Activated CD4-positive, alpha-beta T cell treated with anti-CD3 and anti-CD28 coated beads, Interleukin-2, amount 10 ng/mL, durations not matched to agents 24 days and 14 days (primary cell): ENCODE measurements at regions of chr20 and their contacts with region 1.

Region 1: DNA sequence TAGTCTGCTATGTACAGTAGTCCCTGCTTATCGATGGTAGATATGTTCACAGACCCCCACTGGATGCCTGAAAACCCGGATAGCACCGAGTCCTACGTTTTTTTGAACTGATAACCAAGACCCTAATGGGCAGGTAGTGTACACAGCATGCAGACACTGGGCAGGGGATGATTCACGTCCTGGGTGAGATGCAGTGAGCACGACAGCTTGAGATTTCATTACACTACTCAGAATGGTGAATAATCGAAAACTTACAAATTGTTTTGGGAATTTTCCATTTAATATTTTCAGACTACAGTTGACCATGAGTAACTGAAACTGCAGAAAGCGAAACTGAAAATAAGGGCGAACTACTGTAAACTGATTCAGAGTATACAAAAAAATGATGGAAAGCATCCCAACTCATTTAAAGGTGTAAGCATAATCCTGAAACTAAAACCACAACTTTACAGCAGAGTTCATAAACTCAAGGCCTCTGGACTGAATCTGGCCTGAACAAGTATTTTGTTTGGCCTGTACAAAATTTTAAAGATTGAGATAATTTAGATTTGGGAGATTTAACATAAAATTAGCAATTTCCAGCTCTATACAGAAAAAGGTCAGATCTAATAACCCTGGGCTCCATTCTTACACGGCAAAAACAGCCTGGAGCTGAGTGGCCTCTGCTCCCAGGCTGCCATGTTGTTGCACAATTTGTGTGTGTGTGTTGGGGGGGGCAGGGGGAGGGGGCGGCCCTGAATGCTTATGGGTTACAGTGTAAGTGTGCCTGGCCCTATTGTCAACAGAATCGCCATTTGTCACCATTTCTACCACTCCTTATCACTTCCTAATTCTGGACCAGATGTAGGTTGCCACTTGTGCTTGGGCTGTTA is 34.9 kb downstream of the RNF24 start:
- DNase-seq: peak; percentile 71
- H3K4me3 Mint-ChIP-seq: peak overlapping the region; percentile 80
- H3K27ac Mint-ChIP-seq: peak overlapping the region; percentile 86
- H3K4me1 Mint-ChIP-seq: peaks cover 16% of the 10 kb centered on the region
- H3K27me3 Mint-ChIP-seq: no peaks in the 10 kb centered on the region

Region 2: GRCh38 chr20:3888622-3889488 is 91.6 kb before region 1 on chr20 and contains the start of gene PANK2:
- intact Hi-C with region 1: no loop called
- DNase-seq: peak; percentile 100
- H3K4me3 Mint-ChIP-seq: peak within 1 kb of the TSS; percentile 100
- H3K27ac Mint-ChIP-seq: peak within 1 kb of the TSS; percentile 99
- H3K4me1 Mint-ChIP-seq: peaks cover 45% of the 10 kb centered on the region
- H3K27me3 Mint-ChIP-seq: no peaks in the 10 kb centered on the region
- total RNA-seq, gene PANK2: 45.4 and 52.2 TPM in 2 replicates

Region 3: GRCh38 chr20:3927486-3928291 is 52.8 kb before region 1 on chr20:
- intact Hi-C with region 1: no loop called
- DNase-seq: peak; percentile 56
- H3K4me3 Mint-ChIP-seq: no peak overlapping the region
- H3K27ac Mint-ChIP-seq: no peak overlapping the region
- H3K4me1 Mint-ChIP-seq: peaks cover 32% of the 10 kb centered on the region
- H3K27me3 Mint-ChIP-seq: no peaks in the 10 kb centered on the region

Region 4: DNA sequence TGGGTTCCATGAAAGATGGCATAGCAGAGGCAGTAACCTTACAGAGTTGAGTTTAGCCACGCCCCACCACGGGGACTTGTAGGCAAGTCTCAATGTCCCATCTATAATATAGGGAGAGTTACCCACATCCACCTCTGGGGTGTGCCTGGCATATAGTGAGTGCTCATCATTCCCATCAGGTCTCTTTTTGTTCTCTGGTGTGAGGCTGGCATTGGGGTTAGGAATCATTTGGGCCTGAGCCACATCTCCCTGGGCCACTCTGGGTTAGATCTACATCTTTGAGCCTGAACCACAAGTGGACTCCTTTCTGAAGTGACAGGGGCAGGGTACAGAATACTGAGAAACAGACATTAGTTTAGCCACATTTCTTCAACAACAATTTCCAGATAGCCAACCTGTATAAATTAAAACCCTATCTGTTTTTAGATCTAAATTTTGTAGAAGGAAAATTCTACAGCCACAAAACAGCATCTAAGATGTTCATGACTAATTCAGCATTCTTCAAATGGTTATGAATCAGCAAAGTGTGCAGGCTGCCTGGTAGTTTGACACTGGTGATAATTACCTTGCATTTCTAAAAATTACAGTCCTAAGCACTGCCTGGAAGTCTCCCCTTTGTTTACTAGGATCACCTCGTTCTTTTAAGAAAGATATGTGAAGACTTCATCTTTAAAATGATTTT is 14.7 kb after region 1 on chr20:
- intact Hi-C with region 1: loop called (anchors 2 kb)
- DNase-seq: peak; percentile 67
- H3K4me3 Mint-ChIP-seq: peak overlapping the region; percentile 41
- H3K27ac Mint-ChIP-seq: peak overlapping the region; percentile 76
- H3K4me1 Mint-ChIP-seq: peaks cover 37% of the 10 kb centered on the region
- H3K27me3 Mint-ChIP-seq: no peaks in the 10 kb centered on the region

Region 5: DNA sequence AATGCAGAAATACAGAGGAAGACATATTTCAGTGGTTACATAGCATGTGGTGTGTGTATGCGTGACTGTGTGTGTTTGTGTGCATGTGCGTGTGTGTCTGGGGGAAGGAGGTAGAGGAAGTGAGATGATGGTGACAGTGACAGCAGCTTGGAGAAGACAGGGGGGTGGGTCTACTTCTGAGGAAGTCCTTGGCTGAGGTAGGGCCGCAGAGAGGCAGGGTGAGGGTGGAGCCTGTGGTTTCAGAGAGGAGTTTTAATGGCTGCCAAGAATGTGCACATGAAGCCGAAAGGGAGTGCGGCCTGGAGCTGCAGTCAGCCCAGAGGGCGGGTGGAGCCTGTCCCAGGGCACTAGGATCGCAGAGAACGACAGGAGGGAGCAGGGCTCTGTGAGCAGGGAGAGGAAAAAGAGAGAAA is 57.6 kb after region 1 on chr20:
- intact Hi-C with region 1: loop called (anchors 5 kb)
- DNase-seq: peak; percentile 96
- H3K4me3 Mint-ChIP-seq: peak overlapping the region; percentile 83
- H3K27ac Mint-ChIP-seq: peak overlapping the region; percentile 99
- H3K4me1 Mint-ChIP-seq: peaks cover 30% of the 10 kb centered on the region
- H3K27me3 Mint-ChIP-seq: no peaks in the 10 kb centered on the region